BJ (cell line): ENCODE measurements at regions of chr1 and their contacts with region 1.

Region 1: GRCh38 chr1:173934440-173934839 is 17.3 kb upstream of the SERPINC1 start:
- DNase-seq: no peak
- H3K4me3 ChIP-seq: no peak overlapping the region
- H3K27me3 ChIP-seq: no peaks in the 10 kb centered on the region
- CTCF ChIP-seq: no peak

Region 2: GRCh38 chr1:173865468-173866164 is 68.8 kb before region 1 on chr1:
- CTCF ChIA-PET with region 1: no interaction called
- POLR2A ChIA-PET with region 1: interaction called, 13 read pairs
- DNase-seq: no peak
- H3K4me3 ChIP-seq: peak overlapping the region; percentile 65
- H3K27me3 ChIP-seq: no peaks in the 10 kb centered on the region
- CTCF ChIP-seq: no peak